CD8-positive, alpha-beta T cell (primary cell): ENCODE measurements at regions of chr5 and their contacts with region 1.

Region 1: GRCh38 chr5:118987988-118988865 is at the start of gene DTWD2:
- DNase-seq: peak; percentile 86 to 96 (median 89)
- ATAC-seq: peak; percentile 91
- H3K4me3 ChIP-seq: peak within 1 kb of the TSS; percentile 57 to 77
- H3K4me3 Mint-ChIP-seq: peak within 1 kb of the TSS; percentile 86
- H3K27ac ChIP-seq: peak within 1 kb of the TSS; percentile 55 to 66
- H3K27ac Mint-ChIP-seq: peak within 1 kb of the TSS; percentile 85
- H3K4me1 ChIP-seq: peaks cover 11% of the 10 kb centered on the region
- H3K4me1 Mint-ChIP-seq: peaks cover 16% of the 10 kb centered on the region
- H3K27me3 ChIP-seq: no peaks in the 10 kb centered on the region
- H3K27me3 Mint-ChIP-seq: no peaks in the 10 kb centered on the region
- CTCF ChIP-seq: peak; percentile 99
- total RNA-seq, gene DTWD2: 1.6 to 1.9 TPM

Region 2: GRCh38 chr5:118397236-118397635 is 591.0 kb before region 1 on chr5:
- CTCF ChIA-PET with region 1: no interaction called
- POLR2A ChIA-PET with region 1: no interaction called
- intact Hi-C with region 1: no loop called
- DNase-seq: no peak
- ATAC-seq: no peak
- H3K4me3 ChIP-seq: no peak overlapping the region
- H3K4me3 Mint-ChIP-seq: no peak overlapping the region
- H3K27ac ChIP-seq: no peak overlapping the region
- H3K27ac Mint-ChIP-seq: no peak overlapping the region
- H3K4me1 ChIP-seq: no peaks in the 10 kb centered on the region
- H3K4me1 Mint-ChIP-seq: no peaks in the 10 kb centered on the region
- H3K27me3 ChIP-seq: no peaks in the 10 kb centered on the region
- H3K27me3 Mint-ChIP-seq: no peaks in the 10 kb centered on the region
- CTCF ChIP-seq: no peak

Region 3: GRCh38 chr5:119070828-119071572 is 82.8 kb after region 1 on chr5 and contains the start of gene DMXL1:
- CTCF ChIA-PET with region 1: interaction called, 8 read pairs
- POLR2A ChIA-PET with region 1: interaction called, 17 read pairs
- intact Hi-C with region 1: loop called (anchors 1 kb)
- DNase-seq: peak; percentile 95 to 99 (median 98)
- ATAC-seq: peak; percentile 83
- H3K4me3 ChIP-seq: peak within 1 kb of the TSS; percentile 69 to 79
- H3K4me3 Mint-ChIP-seq: peak within 1 kb of the TSS; percentile 100
- H3K27ac ChIP-seq: peak within 1 kb of the TSS; percentile 92 to 93
- H3K27ac Mint-ChIP-seq: peak within 1 kb of the TSS; percentile 100
- H3K4me1 ChIP-seq: peaks cover 25% of the 10 kb centered on the region
- H3K4me1 Mint-ChIP-seq: peaks cover 42% of the 10 kb centered on the region
- H3K27me3 ChIP-seq: no peaks in the 10 kb centered on the region
- H3K27me3 Mint-ChIP-seq: no peaks in the 10 kb centered on the region
- CTCF ChIP-seq: no peak
- total RNA-seq, gene DMXL1: 28.7 to 32.4 TPM

Region 4: DNA sequence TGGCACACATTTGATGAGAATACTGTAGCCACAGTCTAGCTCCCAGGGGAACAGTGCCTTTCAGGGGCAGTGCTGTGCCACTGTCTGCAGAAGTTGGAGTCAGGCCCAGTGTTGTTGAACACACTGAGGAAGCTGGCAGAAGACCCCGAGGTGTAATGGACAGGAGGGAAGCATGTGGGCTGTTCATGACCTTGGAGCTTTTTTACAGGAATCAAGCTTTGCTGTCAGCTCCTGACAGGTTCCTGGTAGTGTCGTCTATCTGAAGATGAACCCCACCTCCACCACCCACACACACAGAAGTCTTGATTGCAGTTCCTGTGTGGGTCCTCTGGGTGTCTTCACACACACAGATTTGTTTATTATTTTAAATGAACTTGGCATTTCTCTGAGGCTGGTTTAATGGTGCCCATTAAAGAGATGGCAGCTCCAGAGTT is 327.3 kb after region 1 on chr5:
- CTCF ChIA-PET with region 1: interaction called, 12 read pairs
- POLR2A ChIA-PET with region 1: interaction called, 3 read pairs
- intact Hi-C with region 1: no loop called
- DNase-seq: peak in 7 of 9 experiments; percentile 41 to 86 (median 69)
- ATAC-seq: peak; percentile 87
- H3K4me3 ChIP-seq: no peak overlapping the region
- H3K4me3 Mint-ChIP-seq: peak overlapping the region; percentile 37
- H3K27ac ChIP-seq: peak overlapping the region; percentile 25 to 62
- H3K27ac Mint-ChIP-seq: peak overlapping the region; percentile 91
- H3K4me1 ChIP-seq: peaks cover 94% of the 10 kb centered on the region
- H3K4me1 Mint-ChIP-seq: peaks cover 92% of the 10 kb centered on the region
- H3K27me3 ChIP-seq: no peaks in the 10 kb centered on the region
- H3K27me3 Mint-ChIP-seq: no peaks in the 10 kb centered on the region
- CTCF ChIP-seq: peak; percentile 74

Region 5: DNA sequence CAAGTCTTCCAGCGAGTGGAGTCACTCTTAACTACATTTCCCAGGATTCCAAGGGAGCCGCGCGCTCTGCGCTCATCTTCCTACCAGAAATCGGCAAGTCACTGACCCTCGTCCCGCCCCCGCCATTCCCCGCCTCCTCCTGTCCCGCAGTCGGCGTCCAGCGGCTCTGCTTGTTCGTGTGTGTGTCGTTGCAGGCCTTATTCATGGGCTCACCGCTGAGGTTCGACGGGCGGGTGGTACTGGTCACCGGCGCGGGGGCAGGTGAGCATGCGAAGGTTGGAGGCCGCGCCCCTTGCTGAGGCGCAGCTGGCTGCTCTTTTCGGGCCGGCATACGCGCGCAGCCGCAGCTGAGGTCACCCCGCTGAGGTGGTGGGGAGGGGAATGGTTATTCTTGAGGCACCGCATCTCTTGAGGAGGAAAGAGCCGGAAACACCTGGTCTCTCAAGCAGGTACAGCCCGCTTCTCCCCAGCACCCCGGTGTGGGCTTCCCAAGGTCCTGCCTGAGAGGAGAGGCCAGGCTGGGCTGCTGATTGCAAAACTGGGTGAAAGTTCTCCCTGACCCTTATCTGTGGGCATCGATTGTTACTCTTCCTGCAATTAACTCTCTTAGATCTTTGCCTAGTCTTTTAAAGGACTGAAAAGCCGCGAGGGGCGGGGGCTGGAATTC is 464.3 kb after region 1 on chr5 and contains the start of gene HSD17B4:
- CTCF ChIA-PET with region 1: interaction called, 10 read pairs
- POLR2A ChIA-PET with region 1: no interaction called
- intact Hi-C with region 1: loop called in 1 of 2 experiments (anchors 1 kb)
- DNase-seq: peak; percentile 52 to 87 (median 81)
- ATAC-seq: peak; percentile 95
- H3K4me3 ChIP-seq: peak within 1 kb of the TSS; percentile 81 to 87
- H3K4me3 Mint-ChIP-seq: peak within 1 kb of the TSS; percentile 92
- H3K27ac ChIP-seq: peak within 1 kb of the TSS; percentile 66 to 73
- H3K27ac Mint-ChIP-seq: peak within 1 kb of the TSS; percentile 88
- H3K4me1 ChIP-seq: peaks cover 16% of the 10 kb centered on the region
- H3K4me1 Mint-ChIP-seq: peaks cover 21% of the 10 kb centered on the region
- H3K27me3 ChIP-seq: no peaks in the 10 kb centered on the region
- H3K27me3 Mint-ChIP-seq: no peaks in the 10 kb centered on the region
- CTCF ChIP-seq: no peak
- total RNA-seq, gene HSD17B4: 7.4 to 8.6 TPM

Region 6: DNA sequence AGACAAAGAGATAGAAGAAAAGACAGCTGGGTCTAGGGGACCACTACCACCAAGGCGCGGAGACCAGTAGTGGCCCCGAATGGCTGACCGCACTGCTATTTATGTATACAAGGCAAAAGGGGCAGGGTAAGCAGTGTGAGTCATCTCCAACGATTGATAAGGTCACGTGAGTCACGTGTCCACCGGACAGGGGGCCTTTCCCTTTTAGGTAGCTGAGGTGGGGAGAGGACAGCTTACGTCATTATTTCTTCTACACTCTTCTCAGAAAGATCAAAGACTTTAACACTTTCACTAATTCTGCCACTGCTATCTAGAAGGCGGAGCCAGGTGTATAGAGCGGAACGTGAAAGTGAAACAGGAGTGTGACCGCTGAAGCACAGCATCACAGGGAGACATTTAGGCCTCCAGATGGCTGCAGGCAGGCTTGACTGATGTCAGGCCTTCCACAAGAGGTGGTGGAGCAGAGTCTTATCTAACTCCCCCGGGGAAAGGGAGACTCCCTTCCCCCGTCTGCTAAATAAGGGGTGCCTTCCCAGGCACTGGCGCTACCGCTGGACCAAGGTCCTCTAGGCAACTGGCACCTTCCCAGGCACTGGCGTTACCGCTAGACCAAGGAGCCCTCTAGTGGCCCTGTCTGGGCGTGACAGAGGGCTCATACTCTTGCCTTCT is 1469.7 kb after region 1 on chr5:
- CTCF ChIA-PET with region 1: no interaction called
- POLR2A ChIA-PET with region 1: no interaction called
- intact Hi-C with region 1: loop called in 1 of 2 experiments (anchors 5 kb)
- DNase-seq: peak in 7 of 9 experiments; percentile 9 to 64 (median 35)
- ATAC-seq: peak; percentile 57
- H3K4me3 ChIP-seq: peak overlapping the region; percentile 43 to 47
- H3K4me3 Mint-ChIP-seq: peak overlapping the region; percentile 83
- H3K27ac ChIP-seq: no peak overlapping the region
- H3K27ac Mint-ChIP-seq: peak overlapping the region; percentile 62
- H3K4me1 ChIP-seq: no peaks in the 10 kb centered on the region
- H3K4me1 Mint-ChIP-seq: peaks cover 8% of the 10 kb centered on the region
- H3K27me3 ChIP-seq: no peaks in the 10 kb centered on the region
- H3K27me3 Mint-ChIP-seq: peaks cover 7% of the 10 kb centered on the region
- CTCF ChIP-seq: peak; percentile 29